K562 (cell line): ENCODE measurements at regions of chr15 and their contacts with region 1.

Region 1: DNA sequence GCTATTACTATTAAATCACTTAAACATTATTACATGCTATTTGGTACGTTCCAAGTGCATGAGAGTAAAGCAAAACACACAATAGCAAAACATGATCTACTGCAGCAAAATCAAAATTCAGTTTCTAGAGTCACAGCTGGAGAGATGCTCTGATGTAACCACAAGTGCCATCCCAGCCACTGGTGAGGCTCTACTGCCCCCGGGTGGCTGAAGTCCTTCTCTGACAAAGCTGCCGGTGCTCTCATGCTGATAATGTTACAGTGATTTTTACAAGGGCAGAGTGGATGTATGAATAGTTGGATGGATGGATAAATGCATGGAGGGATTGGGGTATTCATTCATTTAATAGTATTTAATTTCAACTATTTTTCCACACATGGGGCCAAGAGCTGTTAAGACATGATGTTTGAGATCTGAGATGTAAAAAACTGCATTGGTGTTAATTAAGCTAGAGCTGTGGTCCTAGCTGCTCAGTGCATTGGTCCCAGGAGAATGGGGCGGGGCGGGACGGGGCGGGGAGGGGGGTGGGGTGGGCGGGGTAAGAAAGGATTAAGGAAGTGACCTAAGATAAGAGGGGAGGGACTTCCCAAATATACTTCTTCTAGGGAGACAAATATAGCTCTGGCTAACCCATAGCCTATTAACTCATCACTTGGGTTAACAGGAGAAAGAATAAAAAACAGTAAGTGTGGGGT is 5.3 kb upstream of the SPESP1 start:
- DNase-seq: peak; percentile 65 to 74 (median 72)
- ATAC-seq: peak; percentile 93
- H3K4me3 ChIP-seq: no peak overlapping the region
- H3K27ac ChIP-seq: no peak overlapping the region
- H3K4me1 ChIP-seq: peaks cover 0 to 5% of the 10 kb centered on the region in 2 experiments; a peak in 2 of 5 replicates
- H3K27me3 ChIP-seq: no peaks in the 10 kb centered on the region
- CTCF ChIP-seq: peak; percentile 85 to 87 (median 86)
- EP300 ChIP-seq: no peak
- POLR2A ChIP-seq: no peak
- RAD21 ChIP-seq: peak; percentile 88 to 91

Region 2: DNA sequence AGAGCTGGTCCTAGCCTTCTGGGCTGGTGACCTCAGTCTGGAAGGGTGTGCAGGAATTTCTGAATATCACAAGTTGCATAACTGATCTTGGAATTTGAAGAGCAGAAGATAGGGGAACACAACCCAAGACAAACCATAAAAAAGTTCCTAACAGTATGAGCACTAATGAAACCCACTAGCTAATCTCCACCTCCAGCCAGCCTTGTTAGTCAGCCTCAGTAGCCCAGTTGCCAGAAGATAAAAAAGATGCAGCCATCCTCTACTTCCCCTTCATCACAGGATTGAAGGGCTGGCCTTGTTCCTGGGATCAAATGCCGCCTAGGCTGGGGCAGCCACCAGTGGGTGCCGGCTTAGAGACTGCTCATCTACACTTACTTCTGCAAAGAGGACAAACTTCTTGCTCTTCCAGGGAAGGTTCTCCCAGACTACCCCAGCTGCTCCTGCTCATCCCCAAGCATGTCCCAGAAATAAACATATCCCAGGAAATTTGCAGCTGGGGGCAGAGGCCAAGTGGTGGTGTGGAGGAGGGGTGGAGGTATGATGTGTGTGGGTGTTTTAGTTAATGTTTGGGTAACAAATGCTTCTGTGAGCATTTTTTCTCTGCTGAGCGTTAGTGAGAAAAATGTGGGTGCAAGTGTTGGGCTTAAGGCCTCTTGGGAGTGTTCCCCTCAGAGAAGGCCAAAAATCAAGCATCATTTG is 483.8 kb before region 1 on chr15:
- CTCF ChIA-PET with region 1: no interaction called
- POLR2A ChIA-PET with region 1: no interaction called
- in situ Hi-C with region 1: no loop called
- intact Hi-C with region 1: no loop called
- DNase-seq: no peak
- ATAC-seq: no peak
- H3K4me3 ChIP-seq: no peak overlapping the region
- H3K27ac ChIP-seq: no peak overlapping the region
- H3K4me1 ChIP-seq: no peaks in the 10 kb centered on the region
- H3K27me3 ChIP-seq: peaks cover 0 to 11% of the 10 kb centered on the region in 2 experiments; a peak in 3 of 5 replicates
- CTCF ChIP-seq: no peak
- EP300 ChIP-seq: no peak
- POLR2A ChIP-seq: no peak
- RAD21 ChIP-seq: no peak

Region 3: GRCh38 chr15:68550481-68551295 is 374.3 kb before region 1 on chr15:
- CTCF ChIA-PET with region 1: interaction called, 8 read pairs
- POLR2A ChIA-PET with region 1: no interaction called
- in situ Hi-C with region 1: no loop called
- intact Hi-C with region 1: loop called (anchors 2 kb)
- DNase-seq: peak; percentile 60 to 72 (median 71)
- ATAC-seq: peak; percentile 87
- H3K4me3 ChIP-seq: no peak overlapping the region
- H3K27ac ChIP-seq: no peak overlapping the region
- H3K4me1 ChIP-seq: no peaks in the 10 kb centered on the region; a peak in 1 of 5 replicates
- H3K27me3 ChIP-seq: peaks cover 4 to 5% of the 10 kb centered on the region in 2 experiments; a peak in 1 of 5 replicates
- CTCF ChIP-seq: peak; percentile 83 to 87 (median 87)
- EP300 ChIP-seq: no peak
- POLR2A ChIP-seq: no peak
- RAD21 ChIP-seq: peak; percentile 68 to 79

Region 4: GRCh38 chr15:69031013-69032001 is 106.3 kb after region 1 on chr15:
- CTCF ChIA-PET with region 1: no interaction called
- POLR2A ChIA-PET with region 1: no interaction called
- in situ Hi-C with region 1: no loop called
- intact Hi-C with region 1: loop called (anchors 5 kb)
- DNase-seq: peak; percentile 48 to 76 (median 62)
- ATAC-seq: peak; percentile 98
- H3K4me3 ChIP-seq: 0 out of 2 replicates have a peak overlapping the region, but pooled peaks have one; percentile 19
- H3K27ac ChIP-seq: no peak overlapping the region
- H3K4me1 ChIP-seq: peaks cover 0 to 13% of the 10 kb centered on the region in 2 experiments; a peak in 1 of 5 replicates
- H3K27me3 ChIP-seq: peaks cover 2 to 45% of the 10 kb centered on the region in 2 experiments; a peak in 2 of 5 replicates
- CTCF ChIP-seq: peak; percentile 79 to 84 (median 81)
- EP300 ChIP-seq: no peak
- POLR2A ChIP-seq: no peak
- RAD21 ChIP-seq: peak; percentile 58 to 89